CD8-positive, alpha-beta T cell (primary cell): ENCODE measurements at regions of chr19 and their contacts with region 1.

Region 1: GRCh38 chr19:16330368-16330801 is 5.8 kb downstream of the KLF2 start:
- DNase-seq: peak; percentile 88 to 99 (median 95)
- ATAC-seq: peak; percentile 74
- H3K4me3 ChIP-seq: no peak overlapping the region
- H3K4me3 Mint-ChIP-seq: peak overlapping the region; percentile 59
- H3K27ac ChIP-seq: peak overlapping the region; percentile 93 to 99
- H3K27ac Mint-ChIP-seq: peak overlapping the region; percentile 96
- H3K4me1 ChIP-seq: peaks cover 36% of the 10 kb centered on the region
- H3K4me1 Mint-ChIP-seq: peaks cover 46% of the 10 kb centered on the region
- H3K27me3 ChIP-seq: no peaks in the 10 kb centered on the region
- H3K27me3 Mint-ChIP-seq: no peaks in the 10 kb centered on the region
- CTCF ChIP-seq: no peak

Region 2: GRCh38 chr19:16345457-16345856 is 15.1 kb after region 1 on chr19:
- CTCF ChIA-PET with region 1: interaction called, 5 read pairs
- POLR2A ChIA-PET with region 1: interaction called, 178 read pairs
- intact Hi-C with region 1: loop called in 1 of 2 experiments (anchors 1 kb)
- DNase-seq: no peak
- ATAC-seq: no peak
- H3K4me3 ChIP-seq: no peak overlapping the region
- H3K4me3 Mint-ChIP-seq: no peak overlapping the region
- H3K27ac ChIP-seq: no peak overlapping the region
- H3K27ac Mint-ChIP-seq: no peak overlapping the region
- H3K4me1 ChIP-seq: peaks cover 30% of the 10 kb centered on the region
- H3K4me1 Mint-ChIP-seq: peaks cover 33% of the 10 kb centered on the region
- H3K27me3 ChIP-seq: no peaks in the 10 kb centered on the region
- H3K27me3 Mint-ChIP-seq: no peaks in the 10 kb centered on the region
- CTCF ChIP-seq: no peak